Common myeloid progenitor, CD34-positive (primary cell): ENCODE measurements at regions of chr3 and their contacts with region 1.

Region 1: GRCh38 chr3:158659454-158660237 is 12.8 kb downstream of the LXN start:
- DNase-seq: peak; percentile 83 to 93 (median 93)
- H3K4me3 ChIP-seq: peak overlapping the region in 1 of 7 experiments; percentile 26
- H3K27ac ChIP-seq: peak overlapping the region; percentile 6 to 46
- H3K4me1 ChIP-seq: peaks cover 0 to 11% (median 8%) of the 10 kb centered on the region in 4 experiments
- H3K27me3 ChIP-seq: no peaks in the 10 kb centered on the region

Region 2: DNA sequence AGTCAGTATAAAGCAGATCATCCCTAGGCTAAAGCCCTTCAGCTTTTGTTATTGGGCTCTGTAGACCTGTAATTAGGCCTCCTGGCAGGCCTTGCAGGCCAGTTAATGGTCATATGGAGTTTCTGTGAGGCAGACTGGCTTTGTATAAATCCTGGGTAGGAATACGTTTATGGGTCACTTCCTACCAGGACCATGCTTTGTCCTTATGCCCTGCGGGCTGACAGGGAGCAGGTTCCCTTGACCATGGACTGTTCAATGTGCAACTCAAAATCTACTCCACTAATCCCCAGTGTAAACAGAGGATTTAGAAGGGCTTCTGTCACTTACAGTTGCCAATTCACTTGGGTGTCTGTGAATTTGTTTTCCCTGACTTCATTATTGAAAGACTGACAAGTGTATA is 291.4 kb before region 1 on chr3:
- CTCF ChIA-PET with region 1: no interaction called
- POLR2A ChIA-PET with region 1: no interaction called
- DNase-seq: no peak
- H3K4me3 ChIP-seq: no peak overlapping the region
- H3K27ac ChIP-seq: no peak overlapping the region
- H3K4me1 ChIP-seq: no peaks in the 10 kb centered on the region
- H3K27me3 ChIP-seq: no peaks in the 10 kb centered on the region

Region 3: DNA sequence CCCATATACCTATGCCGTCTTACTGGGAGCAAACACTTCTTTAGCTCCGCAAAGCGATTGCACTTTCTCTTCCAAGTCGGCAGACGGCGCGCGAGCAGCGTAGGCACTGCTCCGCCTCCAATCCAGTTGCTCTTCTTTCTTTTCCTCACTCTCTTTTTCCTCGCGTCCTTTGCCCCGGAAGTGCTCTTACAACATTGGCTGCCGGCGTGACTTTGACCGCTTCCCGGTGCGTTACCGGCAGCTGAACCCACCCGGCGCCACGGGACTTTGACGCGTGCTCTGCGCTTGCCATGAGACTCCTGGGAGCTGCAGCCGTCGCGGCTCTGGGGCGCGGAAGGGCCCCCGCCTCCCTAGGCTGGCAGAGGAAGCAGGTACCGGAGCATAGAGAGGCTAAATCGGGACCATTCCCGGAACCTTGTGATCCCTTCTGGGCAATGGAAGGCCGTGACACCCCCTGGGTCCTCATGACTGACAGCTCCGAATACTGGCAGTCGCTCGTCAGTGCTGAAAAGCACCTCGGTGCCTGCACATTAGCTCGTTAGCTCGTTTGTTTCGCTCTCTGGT is 15.2 kb before region 1 on chr3 and contains the start of gene GFM1:
- CTCF ChIA-PET with region 1: interaction called, 51 read pairs
- POLR2A ChIA-PET with region 1: interaction called, 7 read pairs
- DNase-seq: peak; percentile 97 to 98 (median 97)
- H3K4me3 ChIP-seq: peak within 1 kb of the TSS; percentile 50 to 99 (median 89)
- H3K27ac ChIP-seq: peak within 1 kb of the TSS; percentile 77 to 88
- H3K4me1 ChIP-seq: peaks cover 0 to 12% (median 7%) of the 10 kb centered on the region in 4 experiments
- H3K27me3 ChIP-seq: no peaks in the 10 kb centered on the region

Region 4: GRCh38 chr3:158672293-158673176 is 12.9 kb after region 1 on chr3 and contains the start of gene LXN:
- CTCF ChIA-PET with region 1: interaction called, 57 read pairs
- POLR2A ChIA-PET with region 1: no interaction called
- DNase-seq: peak; percentile 85 to 91 (median 87)
- H3K4me3 ChIP-seq: peak within 1 kb of the TSS; percentile 77 to 89 (median 82)
- H3K27ac ChIP-seq: peak within 1 kb of the TSS; percentile 71 to 78
- H3K4me1 ChIP-seq: peaks cover 2 to 22% (median 16%) of the 10 kb centered on the region in 4 experiments
- H3K27me3 ChIP-seq: no peaks in the 10 kb centered on the region

Region 5: GRCh38 chr3:158679547-158680000 is 19.9 kb after region 1 on chr3:
- CTCF ChIA-PET with region 1: interaction called, 14 read pairs
- POLR2A ChIA-PET with region 1: no interaction called
- DNase-seq: peak; percentile 19 to 54 (median 34)
- H3K4me3 ChIP-seq: no peak overlapping the region
- H3K27ac ChIP-seq: peak overlapping the region in 1 of 2 experiments; percentile 38
- H3K4me1 ChIP-seq: no peaks in the 10 kb centered on the region
- H3K27me3 ChIP-seq: no peaks in the 10 kb centered on the region

Region 6: GRCh38 chr3:158727206-158728060 is 67.8 kb after region 1 on chr3:
- CTCF ChIA-PET with region 1: interaction called, 36 read pairs
- POLR2A ChIA-PET with region 1: no interaction called
- DNase-seq: peak; percentile 76 to 88 (median 86)
- H3K4me3 ChIP-seq: peak overlapping the region in 5 of 7 experiments; percentile 4 to 67 (median 37)
- H3K27ac ChIP-seq: peak overlapping the region in 1 of 2 experiments; percentile 43
- H3K4me1 ChIP-seq: peaks cover 10 to 39% (median 21%) of the 10 kb centered on the region in 4 experiments
- H3K27me3 ChIP-seq: peaks cover 0 to 6% (median 4%) of the 10 kb centered on the region in 5 experiments

Region 7: DNA sequence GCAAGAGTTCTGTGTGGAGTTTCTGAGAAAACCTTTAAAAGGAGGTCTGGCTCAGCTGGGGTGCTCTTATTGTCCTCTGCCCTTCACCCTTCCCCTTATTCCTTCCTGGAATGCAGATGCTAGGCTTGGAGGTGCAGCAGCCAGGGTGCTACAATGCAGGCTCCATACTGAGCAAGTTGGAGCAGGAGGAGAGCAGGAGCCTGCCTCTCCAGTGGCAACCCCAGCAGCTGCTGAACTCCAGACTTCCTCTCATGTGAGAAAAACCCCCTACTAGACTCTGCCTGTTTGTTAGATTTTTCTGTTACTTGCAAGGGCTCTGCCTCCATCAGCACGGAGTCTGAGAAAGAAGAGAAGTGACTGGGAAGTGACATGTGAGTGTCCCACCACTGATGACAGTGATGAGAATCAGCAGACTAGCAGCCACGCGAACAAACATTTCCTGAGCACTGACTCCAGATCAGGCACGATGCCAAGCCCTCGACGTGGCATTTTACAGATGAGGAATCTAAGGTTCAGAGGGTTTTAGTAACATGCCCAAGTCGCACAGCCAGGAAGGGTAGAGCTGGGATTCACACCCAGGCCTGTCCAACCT is 88.7 kb after region 1 on chr3:
- CTCF ChIA-PET with region 1: no interaction called
- POLR2A ChIA-PET with region 1: no interaction called
- DNase-seq: peak; percentile 22 to 68 (median 66)
- H3K4me3 ChIP-seq: no peak overlapping the region
- H3K27ac ChIP-seq: no peak overlapping the region
- H3K4me1 ChIP-seq: peaks cover 0 to 19% (median 11%) of the 10 kb centered on the region in 4 experiments
- H3K27me3 ChIP-seq: no peaks in the 10 kb centered on the region

Region 8: DNA sequence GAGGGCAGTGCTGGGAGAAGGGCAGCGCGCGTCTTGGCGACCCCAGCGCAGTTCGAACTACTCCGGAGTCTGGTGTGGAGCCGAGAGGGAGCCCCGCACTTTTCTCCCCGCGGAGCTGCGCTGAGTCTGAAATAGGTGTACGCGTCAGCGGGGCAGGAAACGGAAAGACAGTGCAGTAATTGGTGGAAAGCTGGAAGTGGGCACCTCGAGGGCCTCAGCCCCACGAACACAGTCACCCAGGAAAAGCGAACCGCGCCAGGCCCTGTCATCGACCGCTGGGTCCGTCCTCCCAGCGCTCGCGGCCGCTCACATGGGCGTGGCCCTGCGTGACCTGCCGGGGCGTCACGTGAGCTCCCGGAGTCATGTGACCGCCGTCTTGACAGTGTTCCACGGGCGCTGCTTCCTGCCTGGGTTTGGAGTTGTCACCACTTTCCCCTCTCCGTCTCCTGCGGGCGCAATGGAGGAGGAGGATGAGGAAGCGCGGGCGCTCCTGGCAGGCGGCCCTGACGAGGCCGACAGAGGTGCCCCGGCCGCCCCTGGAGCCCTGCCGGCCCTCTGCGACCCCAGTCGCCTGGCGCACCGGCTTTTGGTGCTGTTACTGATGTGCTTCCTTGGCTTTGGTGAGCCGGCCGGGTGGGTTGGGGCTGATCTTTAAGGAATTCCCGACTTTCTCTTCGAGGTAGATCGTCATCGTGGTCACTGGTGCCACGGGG is 142.2 kb after region 1 on chr3 and contains the start of gene MFSD1:
- CTCF ChIA-PET with region 1: interaction called, 14 read pairs
- POLR2A ChIA-PET with region 1: no interaction called
- DNase-seq: peak; percentile 81 to 86 (median 82)
- H3K4me3 ChIP-seq: peak within 1 kb of the TSS; percentile 71 to 96 (median 82)
- H3K27ac ChIP-seq: peak within 1 kb of the TSS; percentile 71 to 85
- H3K4me1 ChIP-seq: peaks cover 19 to 35% (median 27%) of the 10 kb centered on the region in 4 experiments
- H3K27me3 ChIP-seq: no peaks in the 10 kb centered on the region

Region 9: DNA sequence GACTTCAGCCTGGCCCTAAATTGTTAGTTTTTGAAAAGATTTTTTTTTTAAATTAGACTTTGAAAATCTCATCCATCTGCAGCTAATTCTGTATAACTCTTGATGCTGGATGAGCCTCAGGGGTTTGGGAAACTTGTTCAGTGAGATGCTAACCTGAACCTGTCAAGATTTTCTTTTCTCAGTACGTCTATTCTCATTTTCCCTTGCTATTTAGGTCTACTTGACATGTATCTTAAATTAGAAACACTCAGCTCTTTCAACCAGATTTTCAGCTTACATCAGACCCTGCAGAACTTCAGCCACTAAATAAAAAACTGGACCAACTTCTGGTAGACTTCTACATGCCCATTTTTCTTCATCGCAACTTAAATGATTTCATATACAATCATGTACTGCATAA is 203.6 kb after region 1 on chr3:
- CTCF ChIA-PET with region 1: no interaction called
- POLR2A ChIA-PET with region 1: no interaction called
- DNase-seq: no peak
- H3K4me3 ChIP-seq: no peak overlapping the region
- H3K27ac ChIP-seq: no peak overlapping the region
- H3K4me1 ChIP-seq: no peaks in the 10 kb centered on the region
- H3K27me3 ChIP-seq: peaks cover 0 to 2% (median 0%) of the 10 kb centered on the region in 5 experiments